ENCODE measurements at regions of chr3 and their contacts with region 1.

Region 1: GRCh38 chr3:69915726-69916125 is 83.8 kb upstream of the SAMMSON start:
- DNase-seq: no peak
- ATAC-seq: no peak
- H3K4me3 ChIP-seq: no peak overlapping the region
- H3K27ac ChIP-seq: no peak overlapping the region
- H3K4me1 ChIP-seq: no peaks in the 10 kb centered on the region
- H3K27me3 ChIP-seq: no peaks in the 10 kb centered on the region
- CTCF ChIP-seq: no peak
- POLR2A ChIP-seq: no peak
- RAD21 ChIP-seq: no peak

Region 2: DNA sequence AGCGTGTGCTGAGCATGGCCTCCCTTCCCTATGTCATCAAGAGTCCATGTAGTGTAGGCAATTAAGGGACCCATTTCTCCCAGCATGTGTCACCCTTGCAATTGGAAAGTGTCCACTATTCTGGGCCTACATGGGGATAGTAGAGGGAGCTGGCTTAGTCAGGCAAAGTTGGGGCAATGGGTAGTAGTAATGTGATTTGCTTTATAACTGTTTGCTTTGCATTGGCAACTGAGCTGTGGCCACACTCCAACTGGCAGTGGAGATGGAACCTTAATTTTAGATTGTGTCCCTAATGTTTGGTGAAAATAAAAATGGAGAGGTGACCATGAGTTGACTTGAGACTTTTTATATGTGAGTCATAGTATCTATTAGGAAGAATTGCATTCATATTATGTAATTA is 13.9 kb before region 1 on chr3:
- CTCF ChIA-PET with region 1: no interaction called
- POLR2A ChIA-PET with region 1: no interaction called
- dilution Hi-C with region 1: no loop called
- in situ Hi-C with region 1: no loop called
- intact Hi-C with region 1: loop called (anchors 2 kb)
- DNase-seq: no peak
- ATAC-seq: no peak
- H3K4me3 ChIP-seq: no peak overlapping the region
- H3K27ac ChIP-seq: no peak overlapping the region
- H3K4me1 ChIP-seq: peaks cover 2% of the 10 kb centered on the region
- H3K27me3 ChIP-seq: no peaks in the 10 kb centered on the region
- CTCF ChIP-seq: no peak
- POLR2A ChIP-seq: no peak
- RAD21 ChIP-seq: no peak

Region 3: DNA sequence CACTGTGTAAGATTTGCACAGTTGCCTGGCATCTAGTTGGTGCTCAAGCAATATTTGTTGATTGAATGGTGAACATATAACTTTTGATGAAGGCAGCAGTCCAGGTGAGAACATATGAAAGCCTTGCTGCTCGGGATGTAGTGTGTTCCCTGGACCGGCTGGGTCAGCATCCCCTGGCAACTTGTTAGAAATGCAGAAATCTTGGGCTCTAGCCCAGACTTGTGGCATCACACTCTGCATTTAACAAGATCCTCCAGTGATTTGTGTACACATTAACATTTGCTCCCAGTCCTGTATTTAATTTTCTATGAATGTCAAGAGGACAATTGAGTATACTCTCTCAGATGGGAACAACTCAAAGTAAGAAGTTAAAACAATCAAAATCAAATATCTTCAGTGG is 14.8 kb after region 1 on chr3:
- CTCF ChIA-PET with region 1: no interaction called
- POLR2A ChIA-PET with region 1: no interaction called
- dilution Hi-C with region 1: no loop called
- in situ Hi-C with region 1: no loop called
- intact Hi-C with region 1: no loop called
- DNase-seq: peak; percentile 10
- ATAC-seq: peak; percentile 25
- H3K4me3 ChIP-seq: no peak overlapping the region
- H3K27ac ChIP-seq: no peak overlapping the region
- H3K4me1 ChIP-seq: peaks cover 9% of the 10 kb centered on the region
- H3K27me3 ChIP-seq: no peaks in the 10 kb centered on the region
- CTCF ChIP-seq: no peak
- POLR2A ChIP-seq: no peak
- RAD21 ChIP-seq: no peak